Endothelial cell of umbilical vein (primary cell): ENCODE measurements at regions of chr2 and their contacts with region 1.

Region 1: DNA sequence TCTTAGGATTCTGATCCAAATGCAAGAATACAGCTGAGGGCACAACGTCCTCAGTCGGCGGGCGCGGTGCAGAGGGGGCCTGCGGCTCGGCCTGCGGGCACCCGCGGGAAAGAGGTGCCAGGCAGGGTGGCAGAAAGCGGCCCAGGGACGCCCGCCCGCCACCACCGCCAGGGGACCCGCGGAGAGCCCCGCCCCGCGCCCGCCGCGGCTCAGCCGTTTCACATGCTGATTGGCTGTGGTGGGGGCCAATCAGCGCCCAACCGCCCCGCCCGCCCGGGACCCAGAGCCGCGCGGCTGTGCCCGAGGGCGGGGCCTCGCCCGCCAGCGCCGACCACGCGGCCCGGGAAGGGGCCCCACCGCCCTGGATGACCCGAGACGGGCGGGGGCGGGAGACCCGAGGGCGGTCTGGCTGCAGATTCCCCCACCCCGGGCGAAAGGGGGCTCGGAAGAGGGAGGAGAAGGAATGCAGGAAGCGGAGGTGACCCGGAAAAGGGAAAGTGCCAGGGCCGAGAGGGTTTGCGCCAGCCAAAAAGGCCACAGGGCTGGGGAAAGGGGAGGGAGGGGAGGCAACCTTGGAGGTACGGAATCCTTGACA is 8.0 kb downstream of the IRS1 start:
- DNase-seq: peak; percentile 62
- H3K4me3 ChIP-seq: peak overlapping the region; percentile 55 to 69 (median 60)
- H3K27ac ChIP-seq: peak overlapping the region; percentile 41
- H3K4me1 ChIP-seq: peaks cover 4% of the 10 kb centered on the region
- H3K27me3 ChIP-seq: peaks cover 4 to 22% of the 10 kb centered on the region in 2 experiments
- CTCF ChIP-seq: peak; percentile 25 to 27
- POLR2A ChIP-seq: no peak

Region 2: GRCh38 chr2:225429717-225430116 is 1361.9 kb before region 1 on chr2:
- CTCF ChIA-PET with region 1: no interaction called
- POLR2A ChIA-PET with region 1: no interaction called
- dilution Hi-C with region 1: no loop called
- intact Hi-C with region 1: no loop called
- DNase-seq: no peak
- H3K4me3 ChIP-seq: no peak overlapping the region
- H3K27ac ChIP-seq: no peak overlapping the region
- H3K4me1 ChIP-seq: no peaks in the 10 kb centered on the region
- H3K27me3 ChIP-seq: no peaks in the 10 kb centered on the region
- CTCF ChIP-seq: no peak
- POLR2A ChIP-seq: no peak

Region 3: DNA sequence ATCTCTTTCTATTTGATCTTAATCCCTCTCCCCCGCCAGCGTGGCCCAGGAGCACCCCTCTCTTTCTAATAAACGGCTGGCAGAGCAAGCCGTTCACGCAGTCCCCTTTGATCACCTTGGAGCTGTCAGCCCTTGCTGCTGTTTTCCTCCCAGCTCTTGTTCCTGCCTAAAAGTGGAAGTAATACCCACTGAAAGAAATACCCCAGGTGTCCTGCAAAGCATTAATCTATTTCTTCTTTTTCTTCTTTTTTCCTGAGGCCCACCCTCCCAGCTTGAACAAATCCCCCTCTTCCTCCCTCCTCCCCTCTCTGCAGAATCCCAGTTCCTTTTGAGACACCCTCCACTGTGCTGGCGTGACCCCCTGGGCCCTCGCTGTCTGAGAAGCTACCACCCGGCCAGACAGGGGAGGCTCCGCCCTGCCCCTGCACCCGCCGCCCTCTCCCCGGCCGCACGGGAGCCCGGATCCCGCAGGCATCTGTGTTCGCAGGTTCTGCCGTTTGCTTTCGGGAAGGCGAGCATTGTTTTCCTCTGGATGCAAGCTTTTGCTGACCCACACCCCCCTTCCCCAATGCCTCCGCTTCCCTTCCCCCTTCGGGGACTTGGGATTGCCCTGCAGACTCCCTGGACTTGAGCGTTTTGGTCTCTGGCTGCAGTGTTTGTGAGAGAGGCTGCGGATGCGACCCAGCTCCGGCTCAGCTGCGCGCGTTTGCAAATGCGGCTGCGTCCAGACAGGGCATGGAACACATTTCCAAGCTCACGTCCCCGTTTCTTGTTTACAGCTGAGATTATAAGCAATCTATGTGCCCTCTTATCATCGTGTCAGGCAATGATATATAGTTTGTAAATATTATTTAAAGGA is 760.6 kb before region 1 on chr2:
- CTCF ChIA-PET with region 1: no interaction called
- POLR2A ChIA-PET with region 1: no interaction called
- dilution Hi-C with region 1: no loop called
- intact Hi-C with region 1: loop called (anchors 10 kb)
- DNase-seq: peak; percentile 7
- H3K4me3 ChIP-seq: peak overlapping the region in 2 of 3 experiments; percentile 6 to 40
- H3K27ac ChIP-seq: no peak overlapping the region
- H3K4me1 ChIP-seq: no peaks in the 10 kb centered on the region
- H3K27me3 ChIP-seq: peaks cover 0 to 10% of the 10 kb centered on the region in 2 experiments
- CTCF ChIP-seq: no peak
- POLR2A ChIP-seq: no peak

Region 4: GRCh38 chr2:226215902-226216503 is 575.6 kb before region 1 on chr2:
- CTCF ChIA-PET with region 1: interaction called, 3 read pairs
- POLR2A ChIA-PET with region 1: no interaction called
- dilution Hi-C with region 1: no loop called
- intact Hi-C with region 1: loop called (anchors 5 kb)
- DNase-seq: peak; percentile 10
- H3K4me3 ChIP-seq: no peak overlapping the region
- H3K27ac ChIP-seq: no peak overlapping the region
- H3K4me1 ChIP-seq: peaks cover 3% of the 10 kb centered on the region
- H3K27me3 ChIP-seq: no peaks in the 10 kb centered on the region
- CTCF ChIP-seq: peak; percentile 23 to 34
- POLR2A ChIP-seq: no peak

Region 5: GRCh38 chr2:226701052-226701451 is 90.5 kb before region 1 on chr2:
- CTCF ChIA-PET with region 1: no interaction called
- POLR2A ChIA-PET with region 1: no interaction called
- dilution Hi-C with region 1: no loop called
- intact Hi-C with region 1: no loop called
- DNase-seq: no peak
- H3K4me3 ChIP-seq: no peak overlapping the region
- H3K27ac ChIP-seq: no peak overlapping the region
- H3K4me1 ChIP-seq: no peaks in the 10 kb centered on the region
- H3K27me3 ChIP-seq: no peaks in the 10 kb centered on the region
- CTCF ChIP-seq: no peak
- POLR2A ChIP-seq: no peak

Region 6: GRCh38 chr2:226835796-226836547 is 44.4 kb after region 1 on chr2 and contains the start of gene RHBDD1:
- CTCF ChIA-PET with region 1: no interaction called
- POLR2A ChIA-PET with region 1: no interaction called
- dilution Hi-C with region 1: no loop called
- intact Hi-C with region 1: loop called (anchors 1 kb)
- DNase-seq: peak; percentile 93
- H3K4me3 ChIP-seq: peak within 1 kb of the TSS; percentile 74 to 84 (median 82)
- H3K27ac ChIP-seq: peak within 1 kb of the TSS; percentile 84
- H3K4me1 ChIP-seq: peaks cover 16% of the 10 kb centered on the region
- H3K27me3 ChIP-seq: no peaks in the 10 kb centered on the region
- CTCF ChIP-seq: no peak
- POLR2A ChIP-seq: peak; percentile 67
- total RNA-seq, gene RHBDD1: 16.1 and 19.4 TPM in 2 replicates